ENCODE measurements at regions of chr10 and their contacts with region 1.

Region 1: DNA sequence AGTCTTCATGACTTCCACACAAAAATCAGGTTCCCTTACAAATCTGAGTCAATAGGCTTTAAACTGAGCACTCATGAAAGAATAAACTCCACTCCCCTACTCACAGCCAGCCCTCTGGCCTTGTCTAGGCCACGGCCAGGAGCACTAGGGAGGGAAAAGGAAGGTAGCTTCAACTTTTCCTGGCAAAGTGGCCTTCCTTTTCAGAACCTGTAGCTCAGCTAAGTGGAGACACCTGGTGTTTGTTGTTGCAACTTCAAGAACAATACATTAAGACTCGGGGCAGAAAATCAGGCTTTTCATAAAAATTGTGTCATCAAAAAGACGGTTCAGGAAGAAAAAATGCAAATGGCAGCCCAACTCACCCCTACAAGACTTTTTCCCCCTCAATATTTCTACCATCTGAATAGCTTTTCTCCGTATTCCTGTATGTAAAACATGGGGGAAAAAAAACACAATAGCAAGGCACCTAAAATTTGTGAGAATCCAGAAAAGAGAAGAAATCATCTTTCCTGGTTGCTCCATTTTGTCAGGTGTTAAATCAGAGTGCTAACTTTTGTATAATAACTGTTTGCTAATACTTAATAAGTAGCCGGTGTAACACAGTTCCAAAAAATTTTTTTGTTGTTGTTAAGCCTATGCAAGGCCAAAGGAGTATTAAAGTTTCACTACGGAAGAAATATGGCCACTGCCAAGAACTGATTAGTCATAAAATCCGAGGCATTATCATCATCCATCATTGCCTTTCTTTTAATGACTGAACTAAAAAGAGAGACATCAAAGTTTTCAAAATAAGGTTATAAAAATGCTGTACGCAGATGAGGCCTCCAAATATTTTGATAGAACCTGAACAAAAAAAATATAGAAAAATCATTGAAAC is 66.2 kb upstream of the ARID5B start:
- DNase-seq: no peak
- H3K4me3 ChIP-seq: peak overlapping the region in 2 of 4 donors; percentile 1 to 35
- H3K27ac ChIP-seq: peak overlapping the region; percentile 75 to 80 (median 78)
- H3K4me1 ChIP-seq: peaks cover 16 to 50% (median 43%) of the 10 kb centered on the region in 4 donors
- H3K27me3 ChIP-seq: no peaks in the 10 kb centered on the region
- CTCF ChIP-seq: peak in 1 of 3 experiments; percentile 54
- EP300 ChIP-seq: no peak
- POLR2A ChIP-seq: no peak

Region 2: GRCh38 chr10:61750929-61751471 is 84.3 kb before region 1 on chr10:
- intact Hi-C with region 1: loop called (anchors 5 kb)
- DNase-seq: no peak
- H3K4me3 ChIP-seq: no peak overlapping the region
- H3K27ac ChIP-seq: no peak overlapping the region
- H3K4me1 ChIP-seq: peaks cover 0 to 47% (median 40%) of the 10 kb centered on the region in 4 donors
- H3K27me3 ChIP-seq: no peaks in the 10 kb centered on the region
- CTCF ChIP-seq: peak; percentile 53 to 66 (median 57)
- EP300 ChIP-seq: no peak
- POLR2A ChIP-seq: no peak

Region 3: DNA sequence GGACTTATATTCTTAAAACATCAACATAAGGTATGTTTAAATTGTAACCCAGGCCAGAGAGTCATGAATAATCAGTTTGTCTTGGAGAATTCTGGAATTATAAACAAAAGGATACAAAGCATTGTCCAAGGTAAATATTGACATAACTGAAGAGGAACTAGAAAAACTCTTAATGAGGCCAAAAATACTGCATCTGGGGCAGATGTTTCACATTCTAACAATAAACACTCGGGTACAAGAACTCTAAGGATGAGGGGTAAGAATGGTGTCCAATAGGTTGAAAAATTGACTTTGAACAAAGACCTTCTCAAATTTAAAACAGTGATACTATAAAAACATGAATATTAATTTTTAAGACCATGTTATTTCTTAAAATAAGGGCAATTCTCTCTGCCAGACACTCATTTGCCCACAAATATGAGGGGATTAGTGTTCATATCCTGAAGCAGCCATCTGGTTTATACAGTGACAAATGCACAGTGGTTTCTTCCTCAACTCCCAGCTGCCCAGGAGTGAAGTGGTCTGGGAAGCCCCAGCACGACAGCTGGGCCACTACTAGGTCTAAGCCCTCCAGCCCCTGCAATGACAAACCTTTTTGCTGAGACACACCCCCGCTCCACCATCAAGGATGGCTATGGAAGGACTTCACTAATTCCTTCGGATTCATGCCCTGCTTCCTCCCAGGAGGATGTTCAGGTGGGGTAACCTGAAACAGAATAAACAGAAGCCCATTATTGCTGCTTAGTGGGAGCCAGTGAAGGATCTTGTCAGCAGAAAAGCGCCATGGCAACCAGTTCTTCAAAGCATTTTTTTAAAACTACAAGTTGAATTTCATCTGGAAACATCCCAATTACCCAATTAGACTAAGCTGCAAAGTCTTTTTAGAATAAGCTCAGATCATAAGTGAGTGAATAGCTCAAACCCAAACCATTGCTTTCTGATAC is 41.3 kb before region 1 on chr10:
- intact Hi-C with region 1: loop called (anchors 5 kb)
- DNase-seq: no peak
- H3K4me3 ChIP-seq: no peak overlapping the region
- H3K27ac ChIP-seq: peak overlapping the region in 3 of 4 donors; percentile 6 to 62 (median 61)
- H3K4me1 ChIP-seq: peaks cover 3 to 58% (median 53%) of the 10 kb centered on the region in 4 donors
- H3K27me3 ChIP-seq: no peaks in the 10 kb centered on the region
- CTCF ChIP-seq: no peak
- EP300 ChIP-seq: no peak
- POLR2A ChIP-seq: no peak

Region 4: GRCh38 chr10:61896854-61897661 is 61.8 kb after region 1 on chr10:
- intact Hi-C with region 1: loop called (anchors 2 kb)
- DNase-seq: no peak
- H3K4me3 ChIP-seq: peak overlapping the region; percentile 46 to 53 (median 49)
- H3K27ac ChIP-seq: peak overlapping the region; percentile 31 to 59 (median 49)
- H3K4me1 ChIP-seq: peaks cover 20 to 41% (median 35%) of the 10 kb centered on the region in 4 donors
- H3K27me3 ChIP-seq: no peaks in the 10 kb centered on the region
- CTCF ChIP-seq: peak; percentile 46 to 72 (median 56)
- EP300 ChIP-seq: no peak
- POLR2A ChIP-seq: no peak